Naive thymus-derived CD4-positive, alpha-beta T cell (primary cell): ENCODE measurements at regions of chr5 and their contacts with region 1.

Region 1: DNA sequence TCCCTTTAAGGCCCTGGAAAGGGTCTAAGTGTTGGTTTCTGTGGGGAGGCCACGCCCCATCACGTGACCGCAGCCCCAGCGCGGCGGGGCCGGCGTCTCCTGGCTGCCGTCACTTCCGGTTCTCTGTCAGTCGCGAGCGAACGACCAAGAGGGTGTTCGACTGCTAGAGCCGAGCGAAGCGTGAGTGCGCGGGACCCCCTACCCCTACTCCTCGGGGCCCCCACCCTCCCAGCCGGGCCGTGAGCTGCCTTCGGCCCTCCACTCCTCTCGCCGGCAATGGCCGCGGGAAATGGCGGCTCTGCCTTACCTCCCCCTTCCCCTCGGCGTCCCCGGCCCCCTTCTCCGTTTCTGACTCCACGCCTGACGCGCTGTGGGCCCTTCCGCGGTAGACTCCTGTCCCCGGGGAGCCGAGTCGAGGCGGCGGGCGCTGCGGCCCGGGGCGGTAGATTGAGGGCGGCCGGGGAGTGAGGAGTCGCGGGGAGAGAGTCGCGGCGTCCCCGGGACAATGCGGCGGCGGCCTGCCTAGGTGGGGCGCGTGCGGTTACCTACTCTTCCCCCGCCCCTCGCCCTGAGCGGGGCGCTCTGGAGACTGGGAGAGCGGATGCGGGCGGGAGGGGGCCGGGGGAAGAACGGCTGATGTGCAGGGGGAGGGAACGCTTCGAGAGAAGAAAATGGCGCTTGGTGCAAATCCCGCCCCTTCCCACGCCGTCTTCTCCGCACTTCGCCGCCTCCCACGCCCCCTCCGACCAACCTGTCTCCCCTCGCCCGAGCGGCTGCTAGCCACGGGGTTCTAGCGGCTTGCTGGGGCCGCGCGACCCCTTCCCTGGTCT is at the start of gene SUB1:
- DNase-seq: peak; percentile 90 to 94 (median 93)
- ATAC-seq: peak; percentile 93
- H3K4me3 ChIP-seq: peak within 1 kb of the TSS; percentile 94
- H3K4me3 Mint-ChIP-seq: peak within 1 kb of the TSS; percentile 92 to 100 (median 98)
- H3K27ac ChIP-seq: peak within 1 kb of the TSS; percentile 100
- H3K27ac Mint-ChIP-seq: peak within 1 kb of the TSS; percentile 87 to 99 (median 98)
- H3K4me1 ChIP-seq: peaks cover 24 to 36% of the 10 kb centered on the region in 2 donors
- H3K4me1 Mint-ChIP-seq: peaks cover 42 to 72% (median 67%) of the 10 kb centered on the region in 7 donors
- H3K27me3 ChIP-seq: no peaks in the 10 kb centered on the region
- H3K27me3 Mint-ChIP-seq: peaks cover 0 to 2% (median 0%) of the 10 kb centered on the region in 5 donors
- total RNA-seq, gene SUB1: 187 to 388 (median 285) TPM

Region 2: DNA sequence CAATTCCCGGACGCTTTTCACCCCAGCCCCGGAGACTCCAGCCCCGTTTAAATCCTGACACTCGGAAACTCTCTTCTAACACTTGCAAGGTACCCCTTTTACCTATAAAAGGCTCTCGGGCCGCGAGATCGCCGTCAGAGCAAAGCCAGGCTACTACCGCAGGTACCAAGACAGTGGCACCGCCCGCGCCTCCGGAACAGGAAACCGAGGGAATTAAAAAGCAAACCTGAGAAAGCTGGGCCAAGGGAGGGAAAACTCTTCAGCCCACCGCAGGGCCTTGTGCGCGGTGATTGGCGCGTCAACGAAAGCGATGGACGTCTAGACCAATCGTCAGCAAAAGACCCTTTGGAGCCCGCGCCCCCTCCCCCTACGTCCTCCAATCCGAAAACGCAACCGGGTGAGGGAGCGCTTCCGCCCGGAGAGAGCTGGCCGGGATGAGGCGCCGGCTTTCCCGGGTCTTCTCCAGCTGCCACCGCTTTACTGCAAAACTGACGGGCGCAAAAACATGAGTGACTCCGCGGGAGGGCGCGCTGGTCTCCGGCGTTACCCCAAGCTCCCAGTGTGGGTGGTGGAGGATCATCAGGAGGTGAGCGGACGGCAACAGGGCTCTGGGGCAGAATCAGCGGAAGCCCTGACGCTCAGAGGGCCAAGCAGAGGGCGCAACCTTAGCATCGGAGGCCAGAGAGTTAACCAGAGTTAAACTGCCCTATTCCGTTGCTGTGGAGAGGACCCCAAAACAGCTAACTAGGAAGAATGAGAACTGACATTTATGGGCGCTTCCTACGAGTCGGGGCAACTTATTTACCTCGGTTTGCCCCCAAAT is 1053.6 kb before region 1 on chr5 and contains the starts of genes C5orf22 and DROSHA:
- CTCF ChIA-PET with region 1: no interaction called
- POLR2A ChIA-PET with region 1: no interaction called
- intact Hi-C with region 1: loop called in 1 of 2 experiments (anchors 1 kb)
- DNase-seq: peak; percentile 72 to 90 (median 88)
- ATAC-seq: peak; percentile 99
- H3K4me3 ChIP-seq: peak within 1 kb of the TSS; percentile 97
- H3K4me3 Mint-ChIP-seq: peak within 1 kb of the TSS; percentile 93 to 100 (median 98)
- H3K27ac ChIP-seq: peak within 1 kb of the TSS; percentile 89
- H3K27ac Mint-ChIP-seq: peak within 1 kb of the TSS; percentile 83 to 96 (median 90)
- H3K4me1 ChIP-seq: peaks cover 13 to 24% of the 10 kb centered on the region in 2 donors
- H3K4me1 Mint-ChIP-seq: peaks cover 29 to 85% (median 73%) of the 10 kb centered on the region in 7 donors
- H3K27me3 ChIP-seq: no peaks in the 10 kb centered on the region
- H3K27me3 Mint-ChIP-seq: no peaks in the 10 kb centered on the region
- total RNA-seq, gene C5orf22: 10.6 to 31.3 (median 30.6) TPM
- total RNA-seq, gene DROSHA: 48.5 to 92.0 (median 75.7) TPM

Region 3: GRCh38 chr5:32312647-32313523 is 272.8 kb before region 1 on chr5 and contains the start of gene MTMR12:
- CTCF ChIA-PET with region 1: no interaction called
- POLR2A ChIA-PET with region 1: no interaction called
- intact Hi-C with region 1: loop called (anchors 1 kb)
- DNase-seq: peak; percentile 99 to 100 (median 100)
- ATAC-seq: peak; percentile 96
- H3K4me3 ChIP-seq: peak within 1 kb of the TSS; percentile 72
- H3K4me3 Mint-ChIP-seq: peak within 1 kb of the TSS; percentile 89 to 98 (median 92)
- H3K27ac ChIP-seq: peak within 1 kb of the TSS; percentile 79
- H3K27ac Mint-ChIP-seq: peak within 1 kb of the TSS; percentile 88 to 98 (median 95)
- H3K4me1 ChIP-seq: peaks cover 9 to 14% of the 10 kb centered on the region in 2 donors
- H3K4me1 Mint-ChIP-seq: peaks cover 30 to 43% (median 38%) of the 10 kb centered on the region in 7 donors
- H3K27me3 ChIP-seq: no peaks in the 10 kb centered on the region
- H3K27me3 Mint-ChIP-seq: no peaks in the 10 kb centered on the region
- total RNA-seq, gene MTMR12: 19.0 to 28.2 (median 24.0) TPM

Region 4: DNA sequence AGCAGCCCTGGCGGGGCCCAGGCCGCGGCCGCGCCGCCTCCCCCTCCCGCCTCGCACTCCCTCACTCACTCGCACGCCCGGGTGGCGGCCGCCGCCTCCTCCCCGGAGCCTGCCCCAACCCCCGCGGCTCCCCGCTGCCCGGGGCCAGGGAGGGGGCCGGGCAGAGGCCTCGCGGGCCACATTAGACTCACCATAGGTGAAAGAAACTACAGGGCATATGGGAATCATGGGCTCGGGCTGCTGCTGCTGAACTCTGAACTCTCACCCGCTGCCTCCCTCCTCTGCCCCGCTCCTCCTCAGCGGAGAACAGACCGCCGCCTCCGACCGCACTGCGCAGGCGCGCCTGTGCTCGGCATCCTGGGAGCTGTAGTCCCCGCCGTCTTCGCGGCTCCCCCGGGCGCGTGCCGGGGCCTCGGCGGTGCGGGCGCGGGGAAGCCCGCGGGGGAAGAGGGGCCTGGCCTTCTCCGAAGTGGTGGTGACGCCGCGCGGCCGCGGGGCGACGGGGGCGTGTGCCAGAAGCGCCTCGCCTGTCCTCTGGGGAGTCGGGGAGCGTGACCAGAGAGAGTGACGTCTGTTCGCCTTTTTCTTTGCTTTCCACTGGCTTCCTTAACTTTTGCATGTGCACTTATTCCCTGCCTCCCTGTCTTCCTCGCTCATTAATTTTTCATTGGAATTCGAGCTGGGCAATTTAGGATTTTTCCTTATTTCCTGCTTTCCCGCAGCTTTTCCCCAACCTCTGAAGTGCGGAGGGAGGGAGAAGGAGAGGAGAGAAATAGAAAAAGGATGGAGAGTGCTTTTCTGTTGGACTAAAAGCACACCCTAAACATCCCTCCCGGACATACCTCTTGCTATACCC is 141.0 kb before region 1 on chr5 and contains the start of gene ZFR:
- CTCF ChIA-PET with region 1: interaction called, 4 read pairs
- POLR2A ChIA-PET with region 1: interaction called, 5 read pairs
- intact Hi-C with region 1: loop called (anchors 1 kb)
- DNase-seq: peak; percentile 91 to 95 (median 93)
- ATAC-seq: peak; percentile 95
- H3K4me3 ChIP-seq: peak within 1 kb of the TSS; percentile 67
- H3K4me3 Mint-ChIP-seq: peak within 1 kb of the TSS; percentile 79 to 94 (median 92)
- H3K27ac ChIP-seq: peak within 1 kb of the TSS; percentile 93
- H3K27ac Mint-ChIP-seq: peak within 1 kb of the TSS; percentile 75 to 96 (median 93)
- H3K4me1 ChIP-seq: peaks cover 16 to 20% of the 10 kb centered on the region in 2 donors
- H3K4me1 Mint-ChIP-seq: peaks cover 24 to 38% (median 33%) of the 10 kb centered on the region in 7 donors
- H3K27me3 ChIP-seq: no peaks in the 10 kb centered on the region
- H3K27me3 Mint-ChIP-seq: peaks cover 0 to 17% (median 0%) of the 10 kb centered on the region in 5 donors
- total RNA-seq, gene ZFR: 53.4 to 59.3 (median 58.0) TPM

Region 5: DNA sequence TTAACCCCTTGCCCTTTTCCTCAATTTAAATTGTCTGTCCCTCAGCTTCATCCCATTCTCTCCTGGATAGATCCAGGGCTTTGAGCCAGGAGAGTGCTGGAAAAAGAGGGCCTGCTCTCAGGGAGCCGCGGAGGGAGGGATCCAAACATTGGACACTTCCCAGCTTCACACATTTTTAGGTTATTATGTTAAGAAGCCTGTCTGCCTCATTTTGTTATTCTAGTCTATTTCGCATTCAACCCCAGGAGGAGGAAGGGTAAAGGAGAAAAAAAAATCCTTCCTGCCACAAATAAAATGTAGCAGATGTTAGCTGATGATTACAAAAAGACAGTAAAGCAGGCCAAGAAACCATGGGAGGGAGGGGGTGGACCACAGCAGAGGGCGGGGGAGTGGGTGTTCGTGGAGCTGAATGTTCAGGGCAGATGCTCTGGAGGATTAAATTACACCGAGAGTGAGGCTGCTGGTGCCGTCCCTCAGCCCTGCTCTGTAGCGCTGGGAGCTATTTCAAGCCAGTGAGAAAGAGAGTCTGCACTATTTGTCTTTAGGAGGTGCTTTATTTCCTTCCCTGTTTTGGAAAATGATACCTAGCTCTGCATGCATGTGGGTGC is 80.6 kb before region 1 on chr5:
- CTCF ChIA-PET with region 1: interaction called, 16 read pairs
- POLR2A ChIA-PET with region 1: interaction called, 3 read pairs
- intact Hi-C with region 1: no loop called
- DNase-seq: peak in 6 of 9 donors; percentile 7 to 35 (median 14)
- ATAC-seq: peak; percentile 67
- H3K4me3 ChIP-seq: no peak overlapping the region
- H3K4me3 Mint-ChIP-seq: peak overlapping the region in 9 of 10 donors; percentile 13 to 72 (median 46)
- H3K27ac ChIP-seq: peak overlapping the region; percentile 32
- H3K27ac Mint-ChIP-seq: peak overlapping the region in 8 of 9 donors; percentile 1 to 88 (median 74)
- H3K4me1 ChIP-seq: peaks cover 0 to 7% of the 10 kb centered on the region in 2 donors
- H3K4me1 Mint-ChIP-seq: peaks cover 11 to 26% (median 23%) of the 10 kb centered on the region in 7 donors
- H3K27me3 ChIP-seq: no peaks in the 10 kb centered on the region
- H3K27me3 Mint-ChIP-seq: peaks cover 0 to 16% (median 3%) of the 10 kb centered on the region in 5 donors

Region 6: DNA sequence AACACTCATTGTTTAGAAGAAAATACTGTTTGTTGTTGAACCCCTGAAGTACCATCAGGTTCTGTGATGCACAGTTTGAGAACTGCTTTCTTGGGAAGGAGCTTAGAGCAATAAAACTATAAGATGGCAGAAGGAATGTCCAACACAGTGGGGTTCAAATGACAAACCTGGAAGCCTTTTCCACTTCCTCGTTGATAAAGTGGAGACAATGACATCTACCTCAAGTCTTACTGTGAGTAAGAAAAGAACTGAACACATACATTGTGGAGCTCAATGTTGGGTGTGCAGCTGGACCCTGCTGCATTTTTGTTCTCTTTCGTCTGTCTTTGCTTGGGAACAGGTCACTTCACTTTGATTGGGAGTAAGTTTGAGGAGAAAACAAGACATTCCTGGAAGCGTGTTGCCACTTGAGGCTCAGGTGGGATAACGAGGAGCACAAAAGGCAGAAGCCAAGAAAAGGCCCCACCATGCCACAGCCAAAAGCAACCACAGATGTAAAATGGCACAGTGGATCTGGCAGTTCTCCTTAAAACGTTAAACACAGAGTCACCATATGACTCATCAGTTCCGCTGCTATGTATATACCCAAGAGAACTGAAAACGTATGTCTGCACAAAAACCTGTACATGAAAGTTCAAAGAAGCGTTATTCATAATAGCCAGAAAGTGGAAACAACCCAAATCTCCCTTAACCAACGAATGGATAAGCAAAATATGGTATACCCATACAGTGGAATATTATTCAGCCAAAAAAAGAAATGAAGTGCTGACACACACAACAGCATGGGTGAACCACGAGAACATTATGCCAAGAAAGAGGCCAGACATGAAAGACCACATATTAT is 43.2 kb before region 1 on chr5:
- CTCF ChIA-PET with region 1: interaction called, 3 read pairs
- POLR2A ChIA-PET with region 1: interaction called, 3 read pairs
- intact Hi-C with region 1: loop called in 1 of 2 experiments (anchors 1 kb)
- DNase-seq: peak in 1 of 9 donors; percentile 43
- ATAC-seq: no peak
- H3K4me3 ChIP-seq: no peak overlapping the region
- H3K4me3 Mint-ChIP-seq: peak overlapping the region in 1 of 10 donors; percentile 73
- H3K27ac ChIP-seq: no peak overlapping the region
- H3K27ac Mint-ChIP-seq: peak overlapping the region in 1 of 9 donors; percentile 93
- H3K4me1 ChIP-seq: peaks cover 0 to 12% of the 10 kb centered on the region in 2 donors
- H3K4me1 Mint-ChIP-seq: peaks cover 0 to 65% (median 14%) of the 10 kb centered on the region in 7 donors
- H3K27me3 ChIP-seq: no peaks in the 10 kb centered on the region
- H3K27me3 Mint-ChIP-seq: no peaks in the 10 kb centered on the region

Region 7: GRCh38 chr5:33046091-33046490 is 460.4 kb after region 1 on chr5:
- CTCF ChIA-PET with region 1: no interaction called
- POLR2A ChIA-PET with region 1: no interaction called
- intact Hi-C with region 1: no loop called
- DNase-seq: no peak
- ATAC-seq: no peak
- H3K4me3 ChIP-seq: no peak overlapping the region
- H3K4me3 Mint-ChIP-seq: no peak overlapping the region
- H3K27ac ChIP-seq: no peak overlapping the region
- H3K27ac Mint-ChIP-seq: no peak overlapping the region
- H3K4me1 ChIP-seq: no peaks in the 10 kb centered on the region
- H3K4me1 Mint-ChIP-seq: no peaks in the 10 kb centered on the region
- H3K27me3 ChIP-seq: no peaks in the 10 kb centered on the region
- H3K27me3 Mint-ChIP-seq: peaks cover 0 to 3% (median 0%) of the 10 kb centered on the region in 5 donors